GM12878 (cell line): ENCODE measurements at regions of chr22 and their contacts with region 1.

Region 1: DNA sequence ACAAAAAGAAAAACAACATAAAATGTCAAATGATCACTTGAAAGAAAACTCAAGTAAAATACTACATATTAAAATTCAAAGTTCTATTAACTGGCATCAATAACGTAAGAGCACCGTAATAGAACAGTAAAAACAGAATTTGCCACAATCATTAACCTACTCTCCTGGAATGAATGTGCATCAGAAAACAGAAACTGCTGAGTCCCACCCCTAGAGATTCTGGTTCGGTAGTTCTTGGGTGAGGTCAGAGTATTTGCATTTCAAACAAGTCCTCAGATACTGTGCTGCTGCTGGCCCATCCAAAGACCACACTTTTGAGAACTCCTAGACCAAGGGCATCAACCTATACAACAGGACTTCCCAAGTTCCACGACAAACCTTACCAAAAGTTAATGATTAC is 23.5 kb downstream of the PITPNB start:
- DNase-seq: peak; percentile 76
- ATAC-seq: peak; percentile 98
- H3K4me3 ChIP-seq: no peak overlapping the region; the same call in 1 of the 2 replicates
- H3K27ac ChIP-seq: peak overlapping the region; percentile 75
- H3K4me1 ChIP-seq: peaks cover 19% of the 10 kb centered on the region
- H3K27me3 ChIP-seq: no peaks in the 10 kb centered on the region
- CTCF ChIP-seq: no peak
- EP300 ChIP-seq: peak; percentile 75 to 79; a peak in 2 of 4 replicates
- POLR2A ChIP-seq: no peak
- RAD21 ChIP-seq: no peak

Region 2: GRCh38 chr22:27718186-27719032 is 177.2 kb before region 1 on chr22:
- CTCF ChIA-PET with region 1: no interaction called
- POLR2A ChIA-PET with region 1: no interaction called
- RAD21 ChIA-PET with region 1: no interaction called
- SMC1A ChIA-PET with region 1: no interaction called
- in situ Hi-C with region 1: no loop called
- intact Hi-C with region 1: no loop called
- DNase-seq: no peak
- ATAC-seq: peak; percentile 24; the same call in 1 of the 3 replicates
- H3K4me3 ChIP-seq: no peak overlapping the region
- H3K27ac ChIP-seq: no peak overlapping the region
- H3K4me1 ChIP-seq: no peaks in the 10 kb centered on the region
- H3K27me3 ChIP-seq: no peaks in the 10 kb centered on the region
- CTCF ChIP-seq: no peak
- EP300 ChIP-seq: no peak
- POLR2A ChIP-seq: no peak
- RAD21 ChIP-seq: no peak

Region 3: DNA sequence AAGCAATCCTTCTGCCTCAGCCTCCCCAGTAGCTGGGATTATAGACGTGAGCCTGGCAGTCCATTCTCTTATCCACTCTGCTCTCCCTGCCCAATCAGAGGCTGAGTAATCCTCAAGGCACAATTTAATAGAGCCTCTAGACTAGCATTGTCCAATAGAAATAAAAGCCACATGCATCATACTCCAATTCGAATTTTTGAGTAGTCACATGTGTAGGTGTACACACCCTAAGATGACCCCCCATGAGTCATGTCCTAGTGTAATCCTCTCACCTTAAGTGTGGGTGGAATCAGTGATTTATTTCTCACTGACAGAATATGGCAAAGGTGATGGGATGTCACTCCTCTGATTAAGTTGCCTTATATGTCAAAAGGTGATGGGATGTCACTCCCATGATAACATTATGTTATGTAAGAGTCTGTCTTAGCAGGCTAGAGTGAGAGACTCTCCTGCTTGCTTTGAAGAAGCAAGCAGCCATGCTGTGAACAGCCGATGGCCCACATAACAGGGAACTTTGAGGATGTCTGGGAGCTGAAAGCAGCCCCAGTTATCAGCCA is 155.3 kb before region 1 on chr22:
- CTCF ChIA-PET with region 1: no interaction called
- POLR2A ChIA-PET with region 1: no interaction called
- RAD21 ChIA-PET with region 1: no interaction called
- SMC1A ChIA-PET with region 1: no interaction called
- in situ Hi-C with region 1: no loop called
- intact Hi-C with region 1: no loop called
- DNase-seq: no peak
- ATAC-seq: no peak
- H3K4me3 ChIP-seq: no peak overlapping the region
- H3K27ac ChIP-seq: no peak overlapping the region
- H3K4me1 ChIP-seq: no peaks in the 10 kb centered on the region
- H3K27me3 ChIP-seq: no peaks in the 10 kb centered on the region
- CTCF ChIP-seq: no peak
- EP300 ChIP-seq: no peak
- POLR2A ChIP-seq: no peak
- RAD21 ChIP-seq: no peak

Region 4: GRCh38 chr22:27919222-27919941 is 23.8 kb after region 1 on chr22 and contains the start of gene PITPNB:
- CTCF ChIA-PET with region 1: interaction called, 31 read pairs
- POLR2A ChIA-PET with region 1: interaction called, 4 read pairs
- RAD21 ChIA-PET with region 1: interaction called, 6 read pairs
- SMC1A ChIA-PET with region 1: interaction called, 18 read pairs
- in situ Hi-C with region 1: no loop called
- intact Hi-C with region 1: no loop called
- DNase-seq: peak; percentile 90
- ATAC-seq: peak; percentile 87
- H3K4me3 ChIP-seq: peak within 1 kb of the TSS; percentile 85
- H3K27ac ChIP-seq: peak within 1 kb of the TSS; percentile 96
- H3K4me1 ChIP-seq: no peaks in the 10 kb centered on the region
- H3K27me3 ChIP-seq: no peaks in the 10 kb centered on the region
- CTCF ChIP-seq: no peak
- EP300 ChIP-seq: 0 out of 4 replicates have a peak, but pooled peaks of 1 of the 2 experiments have one; percentile 18
- POLR2A ChIP-seq: peak; percentile 80
- RAD21 ChIP-seq: no peak
- polyA plus RNA-seq, gene PITPNB: 43.5 to 52.8 TPM